AG04449 (cell line): ENCODE measurements at regions of chr15 and their contacts with region 1.

Region 1: DNA sequence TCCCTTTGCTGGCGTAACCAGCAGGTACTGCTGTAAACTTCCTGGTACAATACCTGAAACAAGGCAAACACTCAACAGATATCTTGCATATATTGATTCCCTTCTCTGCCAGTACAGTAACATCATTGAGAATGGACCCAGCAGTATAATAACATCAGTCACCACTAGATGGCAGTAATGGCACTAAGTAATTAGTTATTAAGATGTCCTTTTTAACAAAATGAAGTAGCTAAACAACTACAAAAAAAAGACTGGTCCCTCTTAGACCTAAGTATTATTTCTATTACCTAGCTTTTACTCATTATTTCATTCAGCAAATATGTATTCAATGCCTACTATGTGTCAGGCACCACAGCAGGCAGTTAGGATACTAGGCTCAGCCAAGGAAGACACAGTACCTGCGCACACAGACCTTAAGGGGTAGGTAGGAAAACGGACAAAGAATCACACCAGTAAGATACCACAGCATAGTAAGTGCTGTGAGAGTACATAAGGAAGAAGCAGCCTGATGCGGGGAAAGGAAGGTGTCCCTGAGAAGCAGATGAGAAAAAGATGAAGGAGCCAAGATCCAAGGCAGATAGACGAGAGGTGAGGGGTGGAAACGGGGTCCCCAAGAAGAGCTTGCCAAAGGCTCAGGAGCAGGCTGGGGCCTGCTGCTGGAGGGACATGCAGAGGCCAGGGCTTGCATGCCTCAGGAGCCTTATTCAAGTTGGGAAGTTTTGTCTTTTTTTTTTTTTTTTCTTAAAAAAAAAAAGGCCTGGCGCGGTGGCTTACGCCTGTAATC is 102.8 kb upstream of the CHD2 start:
- DNase-seq: peak; percentile 38
- H3K4me3 ChIP-seq: no peak overlapping the region
- CTCF ChIP-seq: peak; percentile 44

Region 2: GRCh38 chr15:92808978-92809879 is 11.9 kb after region 1 on chr15:
- CTCF ChIA-PET with region 1: interaction called, 24 read pairs
- POLR2A ChIA-PET with region 1: no interaction called
- DNase-seq: no peak
- H3K4me3 ChIP-seq: peak overlapping the region; percentile 60
- CTCF ChIP-seq: peak; percentile 73

Region 3: DNA sequence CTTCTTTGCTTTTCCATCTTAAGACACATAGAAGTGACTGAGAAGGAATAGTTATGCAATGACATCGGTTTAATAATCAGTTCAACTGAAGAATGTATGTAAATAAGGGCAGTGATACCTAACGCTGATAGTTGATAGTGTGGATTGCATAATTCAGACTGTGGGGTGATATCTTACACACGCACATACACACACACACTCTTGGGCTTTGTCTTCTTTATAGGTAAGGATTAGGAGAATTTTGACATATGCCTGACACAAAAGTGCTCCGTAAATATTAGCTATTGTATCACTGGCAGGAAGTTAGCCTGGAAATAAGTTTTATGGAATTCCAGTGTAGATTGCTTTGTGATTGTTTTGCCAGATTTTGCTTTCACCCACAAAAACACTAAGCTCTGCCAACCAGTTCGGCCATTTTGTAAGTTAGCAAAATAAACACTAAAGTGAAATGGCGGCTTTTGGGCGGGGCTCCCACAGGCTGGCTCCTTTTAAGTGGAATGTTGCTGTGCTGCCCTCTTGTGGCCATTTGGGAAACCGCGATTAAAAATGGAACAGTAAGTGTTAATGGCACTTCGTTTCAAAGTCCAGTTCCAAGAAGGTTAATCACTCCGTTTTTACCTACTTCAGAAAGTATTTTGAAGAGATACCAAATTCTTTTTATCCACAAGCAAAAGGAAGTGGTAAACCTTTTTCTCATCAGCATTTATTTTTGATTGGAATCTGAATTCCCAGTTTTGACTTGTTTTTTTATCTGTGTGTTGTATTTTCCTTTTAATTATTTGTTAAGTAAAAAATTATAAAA is 120.4 kb after region 1 on chr15:
- CTCF ChIA-PET with region 1: interaction called, 118 read pairs
- POLR2A ChIA-PET with region 1: interaction called, 7 read pairs
- DNase-seq: peak; percentile 54
- H3K4me3 ChIP-seq: no peak overlapping the region
- CTCF ChIP-seq: peak; percentile 64

Region 4: DNA sequence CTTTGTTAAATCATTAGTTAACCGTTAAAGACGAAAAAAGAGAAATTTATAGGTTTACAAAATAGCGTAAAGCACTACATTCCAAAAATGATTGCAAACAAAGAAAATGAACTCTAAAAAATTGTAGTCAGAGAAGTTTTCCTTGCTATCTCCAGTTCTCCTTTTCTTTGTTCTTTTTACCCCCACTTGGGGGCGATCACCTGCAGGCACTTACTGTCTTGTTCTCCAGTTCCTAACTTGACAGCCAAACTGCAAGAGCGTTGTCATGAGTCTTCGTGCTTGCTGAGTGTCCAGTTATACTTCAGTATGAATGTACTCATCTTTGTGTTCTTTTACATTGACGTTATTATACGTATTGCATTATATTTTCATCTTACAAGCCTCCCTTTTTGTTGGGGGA is 157.2 kb after region 1 on chr15:
- CTCF ChIA-PET with region 1: interaction called, 11 read pairs
- POLR2A ChIA-PET with region 1: no interaction called
- DNase-seq: no peak
- H3K4me3 ChIP-seq: no peak overlapping the region
- CTCF ChIP-seq: no peak

Region 5: DNA sequence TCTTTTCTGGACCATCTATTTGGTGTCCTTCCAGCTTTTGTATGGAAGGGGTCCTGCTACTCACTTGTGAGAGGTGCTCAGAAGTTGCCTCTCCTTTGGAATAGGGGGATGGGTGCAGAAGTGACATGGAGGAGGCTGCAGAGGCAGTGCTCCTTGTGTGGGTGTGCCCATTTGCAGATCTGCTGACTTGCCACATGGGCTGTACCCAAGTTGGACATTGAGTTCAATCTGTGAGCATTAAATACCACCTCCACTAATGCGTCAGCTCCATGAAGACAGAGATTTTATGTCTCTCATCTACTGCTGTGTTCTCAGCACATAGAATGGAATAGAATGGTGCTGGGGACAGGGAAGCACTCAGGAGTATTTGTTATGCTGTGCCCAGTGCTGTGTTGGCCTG is 215.4 kb after region 1 on chr15:
- CTCF ChIA-PET with region 1: interaction called, 13 read pairs
- POLR2A ChIA-PET with region 1: no interaction called
- DNase-seq: no peak
- H3K4me3 ChIP-seq: no peak overlapping the region
- CTCF ChIP-seq: no peak

Region 6: DNA sequence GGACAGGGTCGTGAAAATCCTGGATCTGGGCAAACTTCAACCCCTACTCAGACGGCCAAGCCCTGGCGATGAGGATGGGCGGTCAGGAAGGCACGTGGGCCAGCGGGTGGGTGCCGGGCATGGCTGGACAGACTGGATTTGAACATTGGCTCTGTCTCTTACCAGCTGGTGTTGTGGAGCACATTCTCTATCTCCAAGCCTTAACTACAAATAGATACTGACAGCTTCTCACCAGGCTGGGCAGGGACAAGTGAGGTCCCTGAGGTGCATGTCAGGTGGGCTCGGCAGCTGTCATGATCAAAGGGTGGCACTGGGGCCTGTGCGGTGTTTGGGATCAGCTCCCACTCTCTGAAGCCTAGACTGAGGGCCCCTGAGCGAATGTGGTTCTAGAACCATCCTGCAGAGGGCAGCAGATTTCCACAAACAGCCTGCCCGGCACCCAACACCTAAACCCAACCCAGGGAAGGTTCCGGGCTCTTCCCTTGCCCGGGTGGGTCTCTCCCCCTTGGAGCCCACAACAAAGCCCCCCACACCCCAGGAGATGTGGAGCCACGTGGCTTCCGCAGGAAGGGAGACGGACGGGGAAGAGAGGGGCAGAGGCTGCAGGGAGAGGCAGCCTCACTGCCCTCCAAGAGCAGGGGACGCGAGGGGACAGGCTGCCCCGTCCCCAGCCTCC is 233.2 kb after region 1 on chr15:
- CTCF ChIA-PET with region 1: interaction called, 37 read pairs
- POLR2A ChIA-PET with region 1: no interaction called
- DNase-seq: no peak
- H3K4me3 ChIP-seq: no peak overlapping the region
- CTCF ChIP-seq: peak; percentile 79